Psoas muscle (tissue), 8 donors: ENCODE measurements at regions of chr5 and their contacts with region 1.

Region 1: GRCh38 chr5:128213340-128213739 is 129.8 kb downstream of the SLC12A2 start:
- DNase-seq: no peak
- ATAC-seq: peak in 2 of 4 donors; percentile 36 to 80
- H3K4me3 ChIP-seq: no peak overlapping the region
- H3K27ac ChIP-seq: no peak overlapping the region
- H3K4me1 ChIP-seq: no peaks in the 10 kb centered on the region
- H3K27me3 ChIP-seq: no peaks in the 10 kb centered on the region
- CTCF ChIP-seq: peak; percentile 82

Region 2: DNA sequence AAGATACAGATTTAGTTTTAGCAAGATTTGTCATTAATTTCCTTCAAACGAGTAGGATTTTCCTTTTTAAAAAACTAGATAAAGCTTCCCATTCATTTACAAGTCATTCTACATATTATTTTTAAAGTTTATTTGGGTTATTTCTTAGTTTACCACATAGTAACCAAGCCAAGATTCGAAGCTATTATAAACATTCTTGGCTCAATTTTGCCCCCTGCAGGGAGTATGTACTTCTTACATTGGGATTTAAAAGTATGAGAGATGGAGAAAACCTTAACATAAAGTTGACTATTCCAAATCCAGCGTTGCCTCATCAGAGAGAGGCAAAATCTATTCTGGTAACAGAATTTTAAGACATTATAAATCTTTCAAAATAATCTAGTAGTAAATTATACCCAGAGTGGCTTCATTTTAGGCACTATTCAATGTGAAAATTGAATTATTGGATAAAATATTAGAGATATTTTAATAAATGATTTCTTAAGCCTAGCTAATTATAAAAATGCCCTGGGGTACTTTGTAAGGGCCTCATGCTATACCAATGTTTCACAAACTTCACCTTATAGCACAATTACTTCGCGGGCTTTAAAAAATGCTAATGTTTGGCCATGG is 285.6 kb after region 1 on chr5:
- intact Hi-C with region 1: loop called (anchors 2 kb)
- DNase-seq: no peak
- ATAC-seq: no peak
- H3K4me3 ChIP-seq: no peak overlapping the region
- H3K27ac ChIP-seq: no peak overlapping the region
- H3K4me1 ChIP-seq: no peaks in the 10 kb centered on the region
- H3K27me3 ChIP-seq: no peaks in the 10 kb centered on the region
- CTCF ChIP-seq: peak; percentile 62

Region 3: DNA sequence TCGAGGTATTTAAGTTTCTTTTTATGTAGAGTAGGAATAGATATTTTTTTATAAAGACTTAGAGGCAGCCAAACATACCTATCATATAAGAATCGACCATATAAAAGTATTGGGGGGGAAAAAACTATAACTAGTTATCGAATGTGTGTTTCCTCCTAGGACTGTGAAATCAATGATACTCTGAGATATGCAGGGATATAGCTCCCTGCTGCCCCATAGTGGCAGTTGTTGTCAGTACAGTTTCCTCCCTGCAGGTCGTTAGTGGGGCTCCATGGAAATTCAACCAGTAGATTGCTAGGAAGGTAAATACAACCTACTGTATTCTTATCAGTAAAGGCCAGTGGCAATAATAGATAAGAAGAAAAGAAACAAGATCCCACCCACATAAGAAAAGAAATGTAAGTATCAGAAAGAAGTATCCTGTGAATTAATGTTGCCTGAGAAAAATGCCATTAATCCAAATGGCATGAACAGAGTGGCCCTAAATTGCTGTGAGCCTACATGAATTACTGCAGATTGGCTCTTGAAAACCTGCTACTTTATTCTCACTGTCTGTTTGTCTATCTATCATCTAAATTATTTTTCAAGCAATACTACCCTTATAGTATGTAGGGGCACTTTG is 461.6 kb after region 1 on chr5:
- intact Hi-C with region 1: loop called in 1 of 2 experiments (anchors 10 kb)
- DNase-seq: peak in 1 of 2 donors; percentile 14
- ATAC-seq: no peak
- H3K4me3 ChIP-seq: no peak overlapping the region
- H3K27ac ChIP-seq: no peak overlapping the region
- H3K4me1 ChIP-seq: no peaks in the 10 kb centered on the region
- H3K27me3 ChIP-seq: no peaks in the 10 kb centered on the region
- CTCF ChIP-seq: peak; percentile 26

Region 4: GRCh38 chr5:128844354-128844923 is 631.1 kb after region 1 on chr5:
- intact Hi-C with region 1: loop called (anchors 5 kb)
- DNase-seq: no peak
- ATAC-seq: no peak
- H3K4me3 ChIP-seq: no peak overlapping the region
- H3K27ac ChIP-seq: no peak overlapping the region
- H3K4me1 ChIP-seq: no peaks in the 10 kb centered on the region
- H3K27me3 ChIP-seq: no peaks in the 10 kb centered on the region
- CTCF ChIP-seq: peak; percentile 31